Right lobe of liver (tissue), 6 donors: ENCODE measurements at regions of chr7 and their contacts with region 1.

Region 1: GRCh38 chr7:127253281-127254162 is 781 bp upstream of the GRM8 start:
- DNase-seq: peak; percentile 70 to 73 (median 73)
- ATAC-seq: peak; percentile 77 to 83 (median 80)
- H3K4me3 ChIP-seq: peak overlapping the region; percentile 75 to 81 (median 78)
- H3K27ac ChIP-seq: peak overlapping the region in 2 of 3 donors; percentile 20 to 21
- H3K4me1 ChIP-seq: peaks cover 0 to 10% (median 0%) of the 10 kb centered on the region in 4 donors
- H3K27me3 ChIP-seq: no peaks in the 10 kb centered on the region
- CTCF ChIP-seq: peak; percentile 69 to 94 (median 90)
- POLR2A ChIP-seq: no peak

Region 2: GRCh38 chr7:126803060-126803665 is 450.4 kb before region 1 on chr7:
- intact Hi-C with region 1: loop called in 1 of 2 experiments (anchors 10 kb)
- DNase-seq: peak in 1 of 3 donors; percentile 53
- ATAC-seq: peak; percentile 93 to 99 (median 96)
- H3K4me3 ChIP-seq: no peak overlapping the region
- H3K27ac ChIP-seq: no peak overlapping the region
- H3K4me1 ChIP-seq: no peaks in the 10 kb centered on the region
- H3K27me3 ChIP-seq: no peaks in the 10 kb centered on the region
- CTCF ChIP-seq: peak; percentile 72 to 83 (median 76)
- POLR2A ChIP-seq: no peak

Region 3: GRCh38 chr7:127114742-127115265 is 138.7 kb before region 1 on chr7:
- intact Hi-C with region 1: loop called in 1 of 2 experiments (anchors 10 kb)
- DNase-seq: no peak
- ATAC-seq: no peak
- H3K4me3 ChIP-seq: no peak overlapping the region
- H3K27ac ChIP-seq: no peak overlapping the region
- H3K4me1 ChIP-seq: no peaks in the 10 kb centered on the region
- H3K27me3 ChIP-seq: no peaks in the 10 kb centered on the region
- CTCF ChIP-seq: no peak
- POLR2A ChIP-seq: no peak

Region 4: DNA sequence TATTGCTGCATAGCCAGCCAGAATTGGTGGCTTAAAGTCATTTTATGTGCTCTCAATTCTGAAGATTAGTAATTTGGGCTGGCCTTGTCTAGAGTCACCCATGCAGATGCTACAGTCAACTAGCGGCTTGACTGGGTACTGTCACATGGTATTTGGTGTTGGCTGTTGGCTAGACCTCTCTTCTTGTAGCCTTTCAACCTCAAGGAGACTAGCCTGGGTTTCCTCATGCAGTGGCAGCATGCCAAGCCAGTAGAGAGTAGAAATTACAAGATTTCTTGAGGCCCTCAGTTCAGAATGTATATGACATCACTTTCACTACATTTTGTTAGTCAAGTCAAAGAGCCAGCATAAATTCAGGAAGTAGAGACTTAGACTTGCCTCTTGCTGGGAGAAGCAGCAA is 142.7 kb after region 1 on chr7:
- intact Hi-C with region 1: no loop called
- DNase-seq: no peak
- ATAC-seq: no peak
- H3K4me3 ChIP-seq: no peak overlapping the region
- H3K27ac ChIP-seq: no peak overlapping the region
- H3K4me1 ChIP-seq: peaks cover 0 to 8% (median under 1%) of the 10 kb centered on the region in 4 donors
- H3K27me3 ChIP-seq: no peaks in the 10 kb centered on the region
- CTCF ChIP-seq: no peak
- POLR2A ChIP-seq: no peak

Region 5: GRCh38 chr7:127460077-127460476 is 206.6 kb after region 1 on chr7:
- intact Hi-C with region 1: no loop called
- DNase-seq: no peak
- ATAC-seq: no peak
- H3K4me3 ChIP-seq: no peak overlapping the region
- H3K27ac ChIP-seq: no peak overlapping the region
- H3K4me1 ChIP-seq: no peaks in the 10 kb centered on the region
- H3K27me3 ChIP-seq: no peaks in the 10 kb centered on the region
- CTCF ChIP-seq: no peak
- POLR2A ChIP-seq: no peak